GM10248 (cell line): ENCODE measurements at regions of chr7 and their contacts with region 1.

Region 1: DNA sequence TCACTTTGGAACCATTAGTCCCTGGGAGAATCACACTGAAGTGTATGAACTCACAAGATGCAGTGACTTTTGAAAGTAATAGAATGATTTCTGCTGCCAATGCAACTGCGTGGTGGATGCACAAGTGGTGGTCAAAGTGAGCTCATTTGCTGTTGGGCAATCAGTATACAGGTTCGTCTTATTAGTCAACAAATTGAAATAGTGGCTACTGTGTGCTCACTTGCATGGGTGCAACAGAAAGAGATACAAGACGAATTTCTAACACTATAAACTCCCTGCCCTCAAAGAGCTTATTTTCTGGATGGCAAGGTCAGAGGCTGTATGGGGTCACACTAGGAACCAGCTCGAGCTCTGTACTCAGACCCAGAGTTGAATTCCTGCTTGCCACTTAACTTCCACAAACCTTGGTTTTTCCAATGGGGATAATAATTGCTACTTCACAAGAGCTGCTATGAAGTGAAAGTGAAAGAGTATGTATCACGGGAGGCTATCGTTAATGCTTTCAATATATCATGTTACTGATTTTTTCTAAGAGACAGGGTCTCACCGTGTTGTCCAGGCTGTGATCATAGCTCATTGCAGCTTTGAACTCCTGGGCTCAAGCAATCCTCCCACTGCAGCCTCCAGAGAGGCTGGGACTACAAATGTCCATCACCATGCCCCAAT is 8.3 kb upstream of the BCL7B start:
- DNase-seq: no peak
- CTCF ChIP-seq: no peak

Region 2: DNA sequence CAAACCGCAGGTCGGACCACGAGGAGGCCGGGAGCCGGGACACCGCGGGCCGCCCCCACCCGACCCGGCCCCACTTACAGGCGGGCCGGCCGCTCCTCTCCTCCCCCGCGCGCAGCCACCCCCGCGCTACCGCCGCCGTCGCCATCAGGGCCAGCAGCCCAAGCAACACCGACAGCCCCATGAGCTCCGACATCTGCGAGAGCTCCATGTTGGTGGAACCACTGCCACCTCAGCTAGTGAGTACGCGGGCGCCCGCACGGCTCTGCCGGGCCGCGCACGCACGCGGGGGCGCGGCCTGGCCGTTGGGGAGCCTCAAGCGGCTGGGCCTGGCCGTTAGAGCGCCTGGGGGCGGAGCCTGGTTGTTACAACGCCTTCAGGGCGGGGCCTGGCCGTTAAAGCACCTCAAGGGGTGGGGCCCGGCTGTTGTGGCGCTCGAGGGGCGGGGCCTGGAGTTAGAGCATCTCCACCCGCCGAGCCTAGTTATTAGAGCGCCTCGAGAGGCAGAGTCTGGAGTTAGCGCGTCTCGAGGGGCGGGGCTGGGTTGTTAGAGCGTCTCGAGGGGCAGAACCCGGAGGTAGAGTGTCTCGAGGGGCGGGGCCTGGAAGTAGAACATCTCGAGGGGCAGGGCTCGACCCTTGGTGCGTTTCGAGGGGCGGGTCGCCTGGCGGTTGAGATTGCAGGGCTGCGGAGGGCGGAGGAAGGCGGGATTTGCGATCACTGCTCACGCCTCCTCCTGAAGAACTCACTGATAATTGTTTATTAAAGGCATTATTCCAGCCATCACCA is 12.7 kb after region 1 on chr7 and contains the start of gene TBL2:
- CTCF ChIA-PET with region 1: interaction called, 19 read pairs
- POLR2A ChIA-PET with region 1: interaction called, 5 read pairs
- DNase-seq: peak; percentile 99
- CTCF ChIP-seq: peak; percentile 20